SK-N-SH (cell line): ENCODE measurements at regions of chr11 and their contacts with region 1.

Region 1: DNA sequence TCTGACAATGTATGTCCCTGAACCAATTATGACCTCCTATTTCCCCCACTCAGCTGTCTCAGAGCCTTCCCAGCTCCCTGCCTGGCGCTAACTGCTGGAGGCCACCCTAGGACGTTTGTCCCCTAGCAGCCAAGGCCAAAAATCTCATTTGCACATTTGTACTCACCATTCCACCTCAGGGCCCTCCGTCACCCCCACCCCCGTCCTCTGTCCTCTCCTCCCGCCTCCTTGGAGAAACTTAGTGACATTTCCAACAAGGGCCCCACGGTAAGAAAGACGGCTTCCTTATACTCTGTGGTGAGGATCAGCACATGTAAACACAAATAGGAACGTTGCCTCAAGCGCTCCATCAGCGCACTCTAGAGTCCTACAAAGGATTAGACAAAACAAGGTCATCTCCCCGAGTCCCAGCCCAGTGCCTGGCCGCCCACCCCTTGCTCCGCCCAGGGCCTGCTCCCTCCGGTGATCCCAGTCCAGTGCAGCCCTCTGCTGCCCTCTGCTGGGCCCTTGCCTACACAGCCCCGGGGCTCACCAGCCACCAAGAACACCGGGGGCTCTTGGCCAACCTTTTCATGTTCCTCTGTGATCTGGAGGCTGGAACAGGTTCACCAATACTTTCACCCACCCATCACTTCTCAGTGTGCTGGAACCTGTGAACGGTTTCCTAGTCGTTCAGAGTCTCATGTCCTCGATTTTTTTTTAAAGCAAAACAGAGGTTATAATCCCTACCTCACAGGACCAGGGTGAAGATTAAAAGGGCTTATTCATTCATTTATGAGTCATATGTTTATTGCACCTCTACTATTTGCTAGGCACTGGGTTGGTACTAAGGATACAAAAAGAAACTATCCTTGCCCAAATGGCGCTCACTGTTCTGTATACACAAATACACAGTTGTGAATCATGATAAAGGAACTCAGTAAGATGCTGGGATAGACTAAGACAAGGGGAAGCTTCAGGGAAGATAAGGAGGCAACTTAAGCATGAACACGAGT is 15.3 kb upstream of the CTR9 start:
- DNase-seq: peak; percentile 93
- H3K4me3 ChIP-seq: peak overlapping the region; percentile 10 to 54; a peak in 2 of 4 replicates
- H3K27ac ChIP-seq: peak overlapping the region; percentile 62 to 68; a peak in 3 of 4 replicates
- H3K4me1 ChIP-seq: peaks cover 9 to 11% of the 10 kb centered on the region in 2 experiments; a peak in 2 of 4 replicates
- H3K27me3 ChIP-seq: no peaks in the 10 kb centered on the region
- CTCF ChIP-seq: peak; percentile 98
- EP300 ChIP-seq: peak in 1 of 2 experiments; percentile 8; a peak in 1 of 4 replicates
- RAD21 ChIP-seq: peak; percentile 98

Region 2: GRCh38 chr11:10398525-10398924 is 337.3 kb before region 1 on chr11:
- CTCF ChIA-PET with region 1: interaction called, 13 read pairs
- POLR2A ChIA-PET with region 1: no interaction called
- DNase-seq: no peak
- H3K4me3 ChIP-seq: no peak overlapping the region
- H3K27ac ChIP-seq: no peak overlapping the region
- H3K4me1 ChIP-seq: peaks cover 9 to 40% of the 10 kb centered on the region in 2 experiments; a peak in 3 of 4 replicates
- H3K27me3 ChIP-seq: no peaks in the 10 kb centered on the region
- CTCF ChIP-seq: no peak
- EP300 ChIP-seq: no peak
- RAD21 ChIP-seq: no peak